Activated CD8-positive, alpha-beta T cell treated with anti-CD3 and anti-CD28 coated beads for 36 hours (primary cell): ENCODE measurements at regions of chr1 and their contacts with region 1.

Region 1: GRCh38 chr1:12229835-12230548 is at the start of gene VPS13D:
- DNase-seq: peak; percentile 89
- ATAC-seq: peak; percentile 96
- H3K4me3 Mint-ChIP-seq: peak within 1 kb of the TSS; percentile 83
- H3K27ac Mint-ChIP-seq: peak within 1 kb of the TSS; percentile 70
- H3K4me1 Mint-ChIP-seq: peaks cover 18% of the 10 kb centered on the region
- H3K27me3 Mint-ChIP-seq: no peaks in the 10 kb centered on the region
- CTCF ChIP-seq: peak; percentile 94
- total RNA-seq, gene VPS13D: 28.1 to 30.7 TPM

Region 2: DNA sequence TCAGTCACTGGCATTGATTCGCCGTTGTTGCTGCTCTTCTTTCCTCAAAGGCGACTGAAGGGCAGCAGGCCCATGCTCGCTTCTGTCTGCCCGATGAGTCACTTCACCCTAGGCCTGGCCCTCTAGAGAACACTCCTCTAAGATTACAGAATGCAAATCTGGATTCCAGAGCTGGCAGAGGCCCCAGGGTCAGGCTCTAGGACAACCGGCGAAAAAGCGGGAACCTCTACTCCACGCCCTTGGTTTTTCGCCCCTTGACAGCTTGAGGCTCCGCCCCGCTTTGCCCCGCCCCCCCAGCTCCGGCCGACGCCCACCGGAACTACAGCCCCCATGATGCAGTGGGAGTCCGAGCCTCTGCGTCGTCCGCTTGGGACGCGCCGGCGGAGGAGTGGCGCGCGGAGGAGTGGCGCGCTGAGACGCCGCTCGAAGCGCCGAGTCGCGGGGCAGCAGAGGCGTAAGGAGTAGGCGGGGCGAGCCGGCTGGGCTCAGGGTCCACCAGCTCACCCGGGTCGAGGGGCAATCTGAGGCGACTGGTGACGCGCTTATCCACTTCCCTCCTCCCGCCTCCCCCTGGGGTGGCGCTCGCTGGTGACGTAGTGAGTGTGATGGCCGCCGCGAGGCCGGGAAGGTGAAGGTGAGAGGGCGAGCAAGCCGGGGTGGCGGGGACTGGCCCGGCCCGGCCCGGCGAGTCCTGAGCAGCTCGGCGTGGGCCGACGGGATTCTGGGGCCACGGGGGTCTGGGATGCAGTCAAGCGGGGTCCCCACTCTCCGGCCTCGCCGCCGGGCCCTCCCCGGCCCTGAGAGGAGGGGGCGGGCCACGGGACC is 249.9 kb before region 1 on chr1 and contains the start of gene MFN2:
- CTCF ChIA-PET with region 1: no interaction called
- POLR2A ChIA-PET with region 1: no interaction called
- intact Hi-C with region 1: no loop called
- DNase-seq: peak; percentile 97
- ATAC-seq: peak; percentile 93
- H3K4me3 Mint-ChIP-seq: peak within 1 kb of the TSS; percentile 92
- H3K27ac Mint-ChIP-seq: peak within 1 kb of the TSS; percentile 89
- H3K4me1 Mint-ChIP-seq: peaks cover 28% of the 10 kb centered on the region
- H3K27me3 Mint-ChIP-seq: no peaks in the 10 kb centered on the region
- CTCF ChIP-seq: no peak
- total RNA-seq, gene MFN2: 51.0 to 51.1 TPM

Region 3: DNA sequence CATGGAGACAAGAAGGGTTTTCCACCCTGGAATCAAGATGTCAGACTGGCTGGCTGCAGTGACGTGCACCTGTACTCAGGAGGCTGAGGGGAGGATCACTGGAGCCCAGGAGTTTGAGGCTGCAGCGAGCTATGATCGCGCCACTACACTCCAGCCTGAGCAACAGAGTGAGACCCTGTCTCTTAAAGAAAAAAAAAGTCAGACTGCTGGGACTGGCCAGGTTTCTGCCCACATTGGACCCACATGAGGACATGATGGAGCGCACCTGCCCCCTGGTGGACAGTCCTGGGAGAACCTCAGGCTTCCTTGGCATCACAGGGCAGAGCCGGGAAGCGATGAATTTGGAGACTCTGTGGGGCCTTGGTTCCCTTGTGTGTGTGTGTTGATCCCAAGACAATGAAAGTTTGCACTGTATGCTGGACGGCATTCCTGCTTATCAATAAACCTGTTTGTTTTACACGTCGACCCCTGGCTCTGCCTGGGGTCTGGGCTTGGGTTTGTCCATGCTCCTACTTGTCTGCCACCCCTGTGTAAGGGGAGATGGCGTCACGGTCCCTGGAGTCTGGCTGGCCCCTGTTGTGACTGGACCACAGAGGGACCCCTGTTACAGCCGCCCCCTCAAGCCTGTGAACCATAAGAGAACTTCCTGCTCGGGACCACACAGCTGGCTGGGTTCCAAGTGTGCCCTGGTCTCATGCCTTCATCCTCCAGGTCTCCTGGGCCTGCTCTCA is 21.1 kb before region 1 on chr1:
- CTCF ChIA-PET with region 1: interaction called, 11 read pairs
- POLR2A ChIA-PET with region 1: interaction called, 5 read pairs
- intact Hi-C with region 1: no loop called
- DNase-seq: peak; percentile 92
- ATAC-seq: peak; percentile 61
- H3K4me3 Mint-ChIP-seq: no peak overlapping the region
- H3K27ac Mint-ChIP-seq: peak overlapping the region; percentile 43
- H3K4me1 Mint-ChIP-seq: peaks cover 53% of the 10 kb centered on the region
- H3K27me3 Mint-ChIP-seq: no peaks in the 10 kb centered on the region
- CTCF ChIP-seq: peak; percentile 95

Region 4: GRCh38 chr1:12244078-12244477 is 14.1 kb after region 1 on chr1:
- CTCF ChIA-PET with region 1: interaction called, 32 read pairs
- POLR2A ChIA-PET with region 1: no interaction called
- intact Hi-C with region 1: no loop called
- DNase-seq: peak; percentile 31
- ATAC-seq: no peak
- H3K4me3 Mint-ChIP-seq: no peak overlapping the region
- H3K27ac Mint-ChIP-seq: no peak overlapping the region
- H3K4me1 Mint-ChIP-seq: peaks cover 5% of the 10 kb centered on the region
- H3K27me3 Mint-ChIP-seq: no peaks in the 10 kb centered on the region
- CTCF ChIP-seq: peak; percentile 54

Region 5: DNA sequence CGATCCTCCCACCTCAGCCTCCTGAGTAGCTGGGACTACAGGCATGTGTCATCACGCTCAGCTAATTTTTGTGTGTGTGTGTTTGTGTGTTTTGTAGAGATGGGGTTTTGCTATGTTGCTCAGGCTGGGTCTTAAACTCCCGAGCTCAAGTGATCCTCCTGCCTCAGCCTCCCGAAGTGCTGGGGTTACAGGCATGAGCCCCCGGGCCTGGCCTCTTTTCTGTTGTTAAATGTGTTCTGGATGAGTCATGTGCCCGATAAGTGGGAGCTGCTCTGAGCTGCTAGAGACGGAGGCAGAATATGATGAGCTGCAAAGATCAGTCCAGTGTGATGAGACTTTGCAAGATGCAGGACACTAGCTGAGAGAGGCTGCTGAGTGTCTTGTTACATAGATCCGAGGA is 75.4 kb after region 1 on chr1:
- CTCF ChIA-PET with region 1: no interaction called
- POLR2A ChIA-PET with region 1: no interaction called
- intact Hi-C with region 1: no loop called
- DNase-seq: no peak
- ATAC-seq: no peak
- H3K4me3 Mint-ChIP-seq: no peak overlapping the region
- H3K27ac Mint-ChIP-seq: no peak overlapping the region
- H3K4me1 Mint-ChIP-seq: peaks cover 9% of the 10 kb centered on the region
- H3K27me3 Mint-ChIP-seq: no peaks in the 10 kb centered on the region
- CTCF ChIP-seq: no peak